ENCODE measurements at regions of chr6 and their contacts with region 1.

Region 1: DNA sequence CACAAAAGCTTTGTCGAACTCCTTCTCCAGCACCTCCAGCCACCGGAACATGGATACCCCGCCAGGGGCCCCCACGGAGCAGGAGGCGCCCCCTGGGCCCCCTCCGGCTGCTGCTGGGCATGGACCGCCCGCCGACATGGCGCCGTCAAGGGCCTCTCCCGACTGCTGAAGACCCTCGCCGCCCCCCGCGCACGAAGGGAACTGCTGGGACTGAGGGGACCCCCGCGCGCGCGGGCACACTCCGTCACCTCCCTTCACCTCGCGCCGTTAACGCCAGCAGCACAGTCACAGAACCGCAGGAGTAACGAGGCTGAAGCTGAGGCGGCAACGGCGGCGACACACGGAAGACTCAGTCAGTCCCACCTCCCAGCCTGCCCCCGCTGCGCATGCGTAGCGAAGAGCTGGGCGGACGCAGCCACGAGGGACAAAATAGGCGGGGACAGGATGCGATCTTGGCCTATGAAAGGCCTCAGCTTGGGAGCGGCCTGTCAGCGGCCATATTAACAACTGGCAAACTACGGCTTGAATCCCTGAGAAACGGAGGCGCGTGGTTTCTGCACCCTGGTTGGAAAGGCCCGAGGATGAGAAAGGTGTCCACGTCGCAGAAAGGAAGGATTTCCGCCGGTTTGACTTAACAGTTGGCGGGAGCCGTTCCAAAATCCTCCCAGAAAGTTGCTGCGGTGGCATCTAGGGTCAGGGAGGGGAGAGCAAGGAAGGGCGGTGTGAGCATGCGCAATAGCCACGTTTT is at the start of gene GOPC:
- DNase-seq: peak; percentile 99
- H3K4me3 Mint-ChIP-seq: peak within 1 kb of the TSS; percentile 95
- H3K27ac Mint-ChIP-seq: peak within 1 kb of the TSS; percentile 96
- H3K4me1 Mint-ChIP-seq: peaks cover 17% of the 10 kb centered on the region
- H3K27me3 Mint-ChIP-seq: no peaks in the 10 kb centered on the region
- CTCF ChIP-seq: no peak
- total RNA-seq, gene GOPC: 53.2 and 55.7 TPM in 2 replicates

Region 2: GRCh38 chr6:116797585-116797984 is 804.7 kb before region 1 on chr6:
- CTCF ChIA-PET with region 1: no interaction called
- POLR2A ChIA-PET with region 1: no interaction called
- intact Hi-C with region 1: no loop called
- DNase-seq: no peak
- H3K4me3 Mint-ChIP-seq: no peak overlapping the region
- H3K27ac Mint-ChIP-seq: no peak overlapping the region
- H3K4me1 Mint-ChIP-seq: no peaks in the 10 kb centered on the region
- H3K27me3 Mint-ChIP-seq: peaks cover 42% of the 10 kb centered on the region
- CTCF ChIP-seq: no peak

Region 3: GRCh38 chr6:117346142-117346930 is 256.0 kb before region 1 on chr6:
- CTCF ChIA-PET with region 1: interaction called, 28 read pairs
- POLR2A ChIA-PET with region 1: interaction called, 3 read pairs
- intact Hi-C with region 1: loop called (anchors 2 kb)
- DNase-seq: peak; percentile 16
- H3K4me3 Mint-ChIP-seq: no peak overlapping the region
- H3K27ac Mint-ChIP-seq: no peak overlapping the region
- H3K4me1 Mint-ChIP-seq: peaks cover 6% of the 10 kb centered on the region
- H3K27me3 Mint-ChIP-seq: no peaks in the 10 kb centered on the region
- CTCF ChIP-seq: peak; percentile 38

Region 4: DNA sequence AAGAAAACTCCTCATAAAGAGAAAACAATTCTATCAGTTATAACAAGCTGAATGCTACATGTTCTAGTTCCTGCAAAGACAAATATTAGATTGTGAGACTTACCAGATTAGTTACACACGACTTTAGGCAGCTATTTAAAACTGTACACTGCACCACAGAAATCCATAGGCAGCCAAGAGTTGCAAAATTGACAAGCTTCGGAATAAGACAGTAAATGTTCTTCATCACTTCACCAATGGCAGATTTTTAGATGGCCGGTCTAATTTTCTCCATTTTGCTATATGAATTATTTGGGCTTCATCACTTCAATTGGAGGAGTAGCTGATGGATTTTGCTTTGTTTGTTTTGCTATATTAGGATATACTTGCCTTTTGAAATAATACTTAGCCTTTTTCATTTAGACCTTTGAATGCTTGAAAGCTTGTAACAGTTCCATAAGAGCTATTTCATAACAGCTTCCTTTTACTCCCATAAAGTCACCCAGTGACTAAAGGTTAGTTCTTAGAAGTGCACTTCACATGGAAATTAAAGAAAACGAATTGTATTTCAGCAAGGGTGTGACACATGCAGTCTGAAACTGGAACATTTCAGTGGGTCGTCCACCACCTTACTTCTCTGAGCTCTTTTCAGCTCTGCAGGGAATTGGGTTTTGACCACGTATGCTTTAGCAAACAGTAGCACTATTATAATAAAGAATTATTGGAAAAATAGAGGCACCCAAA is 176.7 kb before region 1 on chr6 and contains the start of gene ROS1:
- CTCF ChIA-PET with region 1: interaction called, 8 read pairs
- POLR2A ChIA-PET with region 1: interaction called, 44 read pairs
- intact Hi-C with region 1: no loop called
- DNase-seq: peak; percentile 70
- H3K4me3 Mint-ChIP-seq: peak within 1 kb of the TSS; percentile 79
- H3K27ac Mint-ChIP-seq: peak within 1 kb of the TSS; percentile 76
- H3K4me1 Mint-ChIP-seq: peaks cover 24% of the 10 kb centered on the region
- H3K27me3 Mint-ChIP-seq: no peaks in the 10 kb centered on the region
- CTCF ChIP-seq: no peak
- total RNA-seq, gene ROS1: 63.0 and 69.6 TPM in 2 replicates

Region 5: DNA sequence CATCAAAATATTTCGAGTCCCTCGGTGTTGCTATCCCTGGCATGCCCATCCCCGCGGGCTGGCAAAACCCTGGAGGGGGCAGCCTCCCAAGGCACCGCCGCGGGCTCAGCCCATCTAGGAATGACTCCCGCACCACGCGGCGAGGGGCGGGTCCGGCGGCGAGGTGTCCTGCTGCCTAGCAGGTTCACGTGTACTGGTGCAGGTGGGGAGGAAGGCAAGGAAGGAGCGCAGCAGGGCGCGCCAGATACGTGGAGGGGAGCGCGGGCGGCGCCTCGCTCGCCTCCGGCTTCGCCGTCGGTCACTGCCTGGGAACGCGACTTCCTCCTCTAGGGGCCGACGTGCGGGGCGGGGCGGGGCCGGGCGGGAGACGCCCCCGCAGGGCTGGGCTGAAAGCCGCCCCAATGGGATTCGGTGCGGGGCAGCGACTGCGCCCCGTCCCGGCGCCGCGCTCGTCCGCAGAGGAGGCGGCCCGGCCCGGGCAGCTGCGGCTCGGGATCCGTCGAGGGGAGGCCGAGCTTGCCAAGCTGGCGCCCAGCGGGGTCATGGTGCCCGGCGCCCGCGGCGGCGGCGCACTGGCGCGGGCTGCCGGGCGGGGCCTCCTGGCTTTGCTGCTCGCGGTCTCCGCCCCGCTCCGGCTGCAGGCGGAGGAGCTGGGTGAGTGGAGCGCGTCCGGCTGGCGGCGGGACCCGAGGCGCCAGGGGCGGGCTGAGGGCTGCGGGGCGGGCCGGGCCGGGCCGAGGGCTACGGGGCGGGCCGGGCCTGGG is 119.9 kb before region 1 on chr6 and contains the start of gene DCBLD1:
- CTCF ChIA-PET with region 1: interaction called, 16 read pairs
- POLR2A ChIA-PET with region 1: interaction called, 18 read pairs
- intact Hi-C with region 1: no loop called
- DNase-seq: peak; percentile 75
- H3K4me3 Mint-ChIP-seq: peak within 1 kb of the TSS; percentile 92
- H3K27ac Mint-ChIP-seq: peak within 1 kb of the TSS; percentile 82
- H3K4me1 Mint-ChIP-seq: peaks cover 11% of the 10 kb centered on the region
- H3K27me3 Mint-ChIP-seq: no peaks in the 10 kb centered on the region
- CTCF ChIP-seq: no peak
- total RNA-seq, gene DCBLD1: 25.4 and 26.8 TPM in 2 replicates

Region 6: GRCh38 chr6:117585647-117586046 is 16.7 kb before region 1 on chr6:
- CTCF ChIA-PET with region 1: interaction called, 19 read pairs
- POLR2A ChIA-PET with region 1: interaction called, 10 read pairs
- intact Hi-C with region 1: no loop called
- DNase-seq: no peak
- H3K4me3 Mint-ChIP-seq: no peak overlapping the region
- H3K27ac Mint-ChIP-seq: no peak overlapping the region
- H3K4me1 Mint-ChIP-seq: peaks cover 18% of the 10 kb centered on the region
- H3K27me3 Mint-ChIP-seq: no peaks in the 10 kb centered on the region
- CTCF ChIP-seq: no peak

Region 7: GRCh38 chr6:117674991-117675657 is 72.8 kb after region 1 on chr6 and contains the start of gene NUS1:
- CTCF ChIA-PET with region 1: interaction called, 6 read pairs
- POLR2A ChIA-PET with region 1: interaction called, 8 read pairs
- intact Hi-C with region 1: loop called (anchors 5 kb)
- DNase-seq: peak; percentile 98
- H3K4me3 Mint-ChIP-seq: peak within 1 kb of the TSS; percentile 93
- H3K27ac Mint-ChIP-seq: peak within 1 kb of the TSS; percentile 82
- H3K4me1 Mint-ChIP-seq: peaks cover 45% of the 10 kb centered on the region
- H3K27me3 Mint-ChIP-seq: no peaks in the 10 kb centered on the region
- CTCF ChIP-seq: peak; percentile 62
- total RNA-seq, gene NUS1: 54.7 and 59.4 TPM in 2 replicates